Right cardiac atrium (tissue), 5 donors: ENCODE measurements at regions of chr16 and their contacts with region 1.

Region 1: DNA sequence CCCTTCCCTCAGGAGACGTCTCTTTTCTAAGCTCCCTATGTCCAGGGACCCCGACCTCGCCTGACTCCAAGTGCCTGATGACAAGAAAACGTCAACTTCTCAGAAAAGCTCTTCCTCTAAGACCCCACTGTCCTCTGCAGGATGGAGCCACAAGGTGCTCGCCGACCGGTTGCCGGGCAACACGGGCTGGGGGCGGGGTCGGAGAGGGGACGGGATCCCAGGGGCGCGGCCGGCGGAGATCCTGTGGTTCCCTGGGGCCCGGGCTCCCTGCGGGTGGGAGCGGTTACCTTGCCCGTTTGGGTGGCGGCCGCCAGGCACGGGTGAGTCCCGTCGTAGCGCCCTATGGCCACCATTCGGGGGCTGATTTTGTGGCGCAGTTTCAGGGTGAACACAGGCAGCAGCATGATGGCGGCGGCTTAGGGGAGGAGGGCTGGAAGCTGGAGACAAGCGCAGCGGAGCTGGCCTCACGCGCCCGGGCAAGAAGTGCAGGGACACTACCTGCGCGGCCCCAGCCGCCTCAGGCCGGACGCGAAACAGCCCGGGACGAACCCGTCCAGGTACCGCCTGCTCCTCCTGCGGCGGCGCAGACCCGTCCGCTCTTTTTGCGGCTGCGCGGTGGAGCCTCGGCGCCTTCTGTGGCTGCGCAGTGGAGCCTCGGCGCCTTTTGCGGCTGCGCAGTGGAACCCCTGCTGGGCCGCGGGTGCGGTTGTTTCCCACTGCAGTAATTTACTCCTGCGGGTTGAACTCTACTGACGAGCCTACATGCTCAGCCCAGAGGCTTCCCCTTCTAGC is at the start of gene BBS2:
- DNase-seq: peak; percentile 92 to 98 (median 97)
- ATAC-seq: peak; percentile 98
- H3K4me3 ChIP-seq: peak within 1 kb of the TSS; percentile 63
- H3K27ac ChIP-seq: peak within 1 kb of the TSS; percentile 92
- H3K4me1 ChIP-seq: peaks cover 7% of the 10 kb centered on the region
- H3K27me3 ChIP-seq: no peaks in the 10 kb centered on the region
- total RNA-seq, gene BBS2: 31.4 to 55.9 (median 39.8) TPM

Region 2: DNA sequence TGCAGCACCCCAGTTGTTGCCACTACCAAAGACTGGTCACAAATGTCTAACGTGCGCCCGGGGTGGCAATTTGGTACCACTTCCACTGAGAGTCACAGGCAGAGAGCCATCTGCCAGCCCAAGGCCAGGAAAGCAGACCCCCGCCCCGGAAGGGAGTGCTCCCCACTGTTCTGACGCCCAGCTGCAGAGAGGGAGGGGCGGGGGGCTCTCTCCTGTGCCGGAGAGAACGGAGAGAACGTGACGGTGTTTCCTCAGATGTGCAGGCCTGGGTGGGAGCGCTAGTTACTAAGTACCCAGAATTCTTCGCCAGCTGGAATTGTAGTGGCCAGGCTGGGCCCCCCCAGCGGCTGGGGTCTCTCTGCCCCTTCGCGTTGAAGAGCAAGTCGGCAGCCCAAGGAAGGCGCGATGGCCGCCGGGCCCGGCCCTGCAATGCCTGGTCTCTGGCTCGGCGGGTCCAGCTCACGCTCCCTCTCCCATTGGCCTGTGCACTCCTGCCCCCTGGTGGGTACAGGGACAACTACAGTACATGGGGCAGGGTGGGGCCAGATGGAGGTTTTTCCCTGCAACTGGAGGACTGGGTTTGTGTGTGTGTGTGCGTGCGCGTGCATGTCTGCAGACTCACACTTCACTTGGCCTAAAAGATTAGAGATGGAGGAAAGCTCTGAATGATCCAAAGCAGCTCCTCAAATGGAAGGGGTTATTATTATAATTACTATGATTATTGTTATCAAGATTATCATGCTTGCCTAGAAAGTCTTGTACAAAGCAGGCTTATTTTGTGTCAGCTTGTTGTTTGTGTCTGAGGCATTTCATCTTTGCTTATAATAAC is 201.4 kb before region 1 on chr16:
- intact Hi-C with region 1: no loop called
- DNase-seq: peak; percentile 85 to 95 (median 93)
- ATAC-seq: peak; percentile 95 to 96
- H3K4me3 ChIP-seq: peak overlapping the region; percentile 11
- H3K27ac ChIP-seq: peak overlapping the region; percentile 6
- H3K4me1 ChIP-seq: no peaks in the 10 kb centered on the region
- H3K27me3 ChIP-seq: no peaks in the 10 kb centered on the region

Region 3: GRCh38 chr16:56589141-56590039 is 69.7 kb after region 1 on chr16 and contains the start of gene MT3:
- intact Hi-C with region 1: loop called in 1 of 4 experiments (anchors 10 kb)
- DNase-seq: no peak
- ATAC-seq: peak in 1 of 2 donors; percentile 48
- H3K4me3 ChIP-seq: peak within 1 kb of the TSS; percentile 28
- H3K27ac ChIP-seq: no peak within 1 kb of the TSS
- H3K4me1 ChIP-seq: no peaks in the 10 kb centered on the region
- H3K27me3 ChIP-seq: no peaks in the 10 kb centered on the region
- total RNA-seq, gene MT3: 2.0 to 6.1 (median 3.3) TPM

Region 4: DNA sequence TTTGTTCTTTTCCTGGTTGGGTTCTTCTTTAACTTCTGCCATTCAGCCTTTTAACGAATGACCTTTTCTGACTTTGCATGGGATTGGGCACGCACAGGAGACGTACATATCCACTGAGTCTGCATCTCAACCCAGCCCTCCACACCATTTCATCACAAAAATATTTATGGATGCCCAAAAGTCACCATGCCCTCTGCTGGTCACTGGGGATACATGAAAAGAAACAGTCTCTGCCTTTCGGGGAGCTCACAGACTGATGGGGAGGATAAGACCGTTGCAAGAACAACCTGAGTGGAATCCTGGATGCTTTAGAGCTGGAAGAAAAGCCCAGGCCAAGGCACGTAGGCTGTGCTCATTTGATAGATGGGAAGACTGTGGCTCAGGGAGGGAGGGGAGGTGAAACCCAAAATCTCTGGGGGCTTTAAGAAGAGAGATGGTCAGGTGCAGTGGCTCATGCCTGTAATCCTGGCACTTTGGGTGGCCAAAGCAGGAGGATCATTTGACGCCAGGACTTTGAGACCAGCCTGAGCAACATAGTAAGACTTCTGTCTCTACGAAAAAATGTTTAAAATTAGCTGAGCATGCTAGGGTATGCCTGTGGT is 80.8 kb after region 1 on chr16:
- intact Hi-C with region 1: loop called in 3 of 4 experiments (anchors 2 to 10 kb)
- DNase-seq: no peak
- ATAC-seq: peak; percentile 37 to 51
- H3K4me3 ChIP-seq: no peak overlapping the region
- H3K27ac ChIP-seq: no peak overlapping the region
- H3K4me1 ChIP-seq: no peaks in the 10 kb centered on the region
- H3K27me3 ChIP-seq: no peaks in the 10 kb centered on the region

Region 5: GRCh38 chr16:56691885-56692284 is 172.2 kb after region 1 on chr16:
- intact Hi-C with region 1: loop called in 1 of 4 experiments (anchors 10 kb)
- DNase-seq: no peak
- ATAC-seq: peak; percentile 53 to 69
- H3K4me3 ChIP-seq: no peak overlapping the region
- H3K27ac ChIP-seq: no peak overlapping the region
- H3K4me1 ChIP-seq: no peaks in the 10 kb centered on the region
- H3K27me3 ChIP-seq: no peaks in the 10 kb centered on the region

Region 6: GRCh38 chr16:56708525-56709442 is 189.1 kb after region 1 on chr16:
- intact Hi-C with region 1: loop called in 2 of 4 experiments (anchors 5 to 10 kb)
- DNase-seq: no peak
- ATAC-seq: no peak
- H3K4me3 ChIP-seq: no peak overlapping the region
- H3K27ac ChIP-seq: no peak overlapping the region
- H3K4me1 ChIP-seq: no peaks in the 10 kb centered on the region
- H3K27me3 ChIP-seq: no peaks in the 10 kb centered on the region